Activated CD4-positive, alpha-beta T cell treated with anti-CD3 and anti-CD28 coated beads for 36 hours (primary cell): ENCODE measurements at regions of chr14 and their contacts with region 1.

Region 1: GRCh38 chr14:87896393-87897380 is 96.3 kb downstream of the GALC start:
- DNase-seq: no peak
- ATAC-seq: no peak
- H3K4me3 Mint-ChIP-seq: no peak overlapping the region
- H3K27ac Mint-ChIP-seq: no peak overlapping the region
- H3K4me1 Mint-ChIP-seq: no peaks in the 10 kb centered on the region
- H3K27me3 Mint-ChIP-seq: peaks cover 12% of the 10 kb centered on the region

Region 2: GRCh38 chr14:87615822-87616679 is 280.6 kb before region 1 on chr14:
- CTCF ChIA-PET with region 1: no interaction called
- POLR2A ChIA-PET with region 1: no interaction called
- intact Hi-C with region 1: loop called in 1 of 2 experiments (anchors 10 kb)
- DNase-seq: peak; percentile 63
- ATAC-seq: peak; percentile 49
- H3K4me3 Mint-ChIP-seq: no peak overlapping the region
- H3K27ac Mint-ChIP-seq: no peak overlapping the region
- H3K4me1 Mint-ChIP-seq: no peaks in the 10 kb centered on the region
- H3K27me3 Mint-ChIP-seq: peaks cover 12% of the 10 kb centered on the region

Region 3: GRCh38 chr14:87745507-87746118 is 151.1 kb before region 1 on chr14:
- CTCF ChIA-PET with region 1: interaction called, 17 read pairs
- POLR2A ChIA-PET with region 1: no interaction called
- intact Hi-C with region 1: loop called (anchors 1 to 2 kb)
- DNase-seq: peak; percentile 37
- ATAC-seq: peak; percentile 49
- H3K4me3 Mint-ChIP-seq: no peak overlapping the region
- H3K27ac Mint-ChIP-seq: no peak overlapping the region
- H3K4me1 Mint-ChIP-seq: no peaks in the 10 kb centered on the region
- H3K27me3 Mint-ChIP-seq: peaks cover 7% of the 10 kb centered on the region

Region 4: DNA sequence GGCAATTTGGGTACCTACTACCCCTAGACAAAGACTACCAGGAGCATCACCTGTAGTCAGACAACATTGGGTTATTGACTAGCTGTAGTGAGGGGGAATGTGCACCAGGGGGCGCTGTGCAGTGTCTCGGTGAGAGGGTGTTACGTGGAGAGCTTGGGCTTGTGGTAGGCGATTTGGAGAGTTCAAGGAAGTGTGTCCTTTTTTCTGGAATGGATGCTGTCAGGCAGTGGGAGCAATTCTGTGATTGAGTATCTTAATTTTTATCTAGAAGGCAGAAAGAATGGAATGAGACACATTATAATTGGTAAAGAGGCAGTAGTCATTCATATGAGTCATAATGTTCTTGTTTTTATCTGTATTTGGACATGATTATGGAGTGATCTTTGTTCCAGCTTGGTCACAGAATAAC is 91.4 kb before region 1 on chr14:
- CTCF ChIA-PET with region 1: interaction called, 68 read pairs
- POLR2A ChIA-PET with region 1: no interaction called
- intact Hi-C with region 1: loop called (anchors 1 kb)
- DNase-seq: peak; percentile 77
- ATAC-seq: peak; percentile 72
- H3K4me3 Mint-ChIP-seq: no peak overlapping the region
- H3K27ac Mint-ChIP-seq: no peak overlapping the region
- H3K4me1 Mint-ChIP-seq: no peaks in the 10 kb centered on the region
- H3K27me3 Mint-ChIP-seq: peaks cover 7% of the 10 kb centered on the region

Region 5: GRCh38 chr14:87908550-87908949 is 11.9 kb after region 1 on chr14:
- CTCF ChIA-PET with region 1: no interaction called
- POLR2A ChIA-PET with region 1: no interaction called
- intact Hi-C with region 1: no loop called
- DNase-seq: no peak
- ATAC-seq: no peak
- H3K4me3 Mint-ChIP-seq: no peak overlapping the region
- H3K27ac Mint-ChIP-seq: no peak overlapping the region
- H3K4me1 Mint-ChIP-seq: no peaks in the 10 kb centered on the region
- H3K27me3 Mint-ChIP-seq: peaks cover 10% of the 10 kb centered on the region